Activated CD4-positive, alpha-beta T cell treated with anti-CD3 and anti-CD28 coated beads, Interleukin-2, amount 10 ng/mL, durations not matched to agents 24 days and 14 days (primary cell): ENCODE measurements at regions of chr11 and their contacts with region 1.

Region 1: DNA sequence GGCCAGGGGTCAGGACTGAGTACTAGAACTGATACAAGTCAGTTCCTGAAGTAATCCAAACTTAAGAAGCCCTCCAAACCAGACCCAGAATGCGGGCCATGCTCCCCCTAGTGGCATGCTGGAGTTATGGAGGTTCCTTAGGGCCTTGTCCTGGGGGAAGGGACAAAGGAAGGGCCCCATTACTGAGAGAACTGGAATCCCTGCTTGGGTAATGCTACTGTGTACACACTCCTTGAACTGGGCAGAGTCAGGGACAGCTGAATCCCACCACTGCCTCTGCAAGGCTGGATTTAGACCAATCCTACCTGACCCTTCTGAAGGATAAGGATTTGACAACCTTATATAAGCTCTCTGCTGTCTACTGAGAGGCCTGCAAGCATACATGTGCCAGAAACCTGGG is 97.3 kb upstream of the AKIP1 start:
- DNase-seq: peak; percentile 78
- H3K4me3 Mint-ChIP-seq: no peak overlapping the region
- H3K27ac Mint-ChIP-seq: no peak overlapping the region
- H3K4me1 Mint-ChIP-seq: peaks cover 9% of the 10 kb centered on the region
- H3K27me3 Mint-ChIP-seq: peaks cover 20% of the 10 kb centered on the region

Region 2: GRCh38 chr11:8688414-8689362 is 125.0 kb before region 1 on chr11:
- intact Hi-C with region 1: loop called (anchors 10 kb)
- DNase-seq: peak; percentile 96
- H3K4me3 Mint-ChIP-seq: peak overlapping the region; percentile 94
- H3K27ac Mint-ChIP-seq: peak overlapping the region; percentile 88
- H3K4me1 Mint-ChIP-seq: peaks cover 43% of the 10 kb centered on the region
- H3K27me3 Mint-ChIP-seq: no peaks in the 10 kb centered on the region

Region 3: GRCh38 chr11:8709002-8709672 is 104.5 kb before region 1 on chr11:
- intact Hi-C with region 1: no loop called
- DNase-seq: no peak
- H3K4me3 Mint-ChIP-seq: no peak overlapping the region
- H3K27ac Mint-ChIP-seq: no peak overlapping the region
- H3K4me1 Mint-ChIP-seq: peaks cover 2% of the 10 kb centered on the region
- H3K27me3 Mint-ChIP-seq: no peaks in the 10 kb centered on the region

Region 4: GRCh38 chr11:8794677-8795103 is 19.0 kb before region 1 on chr11:
- intact Hi-C with region 1: no loop called
- DNase-seq: no peak
- H3K4me3 Mint-ChIP-seq: no peak overlapping the region
- H3K27ac Mint-ChIP-seq: no peak overlapping the region
- H3K4me1 Mint-ChIP-seq: no peaks in the 10 kb centered on the region
- H3K27me3 Mint-ChIP-seq: peaks cover 31% of the 10 kb centered on the region

Region 5: DNA sequence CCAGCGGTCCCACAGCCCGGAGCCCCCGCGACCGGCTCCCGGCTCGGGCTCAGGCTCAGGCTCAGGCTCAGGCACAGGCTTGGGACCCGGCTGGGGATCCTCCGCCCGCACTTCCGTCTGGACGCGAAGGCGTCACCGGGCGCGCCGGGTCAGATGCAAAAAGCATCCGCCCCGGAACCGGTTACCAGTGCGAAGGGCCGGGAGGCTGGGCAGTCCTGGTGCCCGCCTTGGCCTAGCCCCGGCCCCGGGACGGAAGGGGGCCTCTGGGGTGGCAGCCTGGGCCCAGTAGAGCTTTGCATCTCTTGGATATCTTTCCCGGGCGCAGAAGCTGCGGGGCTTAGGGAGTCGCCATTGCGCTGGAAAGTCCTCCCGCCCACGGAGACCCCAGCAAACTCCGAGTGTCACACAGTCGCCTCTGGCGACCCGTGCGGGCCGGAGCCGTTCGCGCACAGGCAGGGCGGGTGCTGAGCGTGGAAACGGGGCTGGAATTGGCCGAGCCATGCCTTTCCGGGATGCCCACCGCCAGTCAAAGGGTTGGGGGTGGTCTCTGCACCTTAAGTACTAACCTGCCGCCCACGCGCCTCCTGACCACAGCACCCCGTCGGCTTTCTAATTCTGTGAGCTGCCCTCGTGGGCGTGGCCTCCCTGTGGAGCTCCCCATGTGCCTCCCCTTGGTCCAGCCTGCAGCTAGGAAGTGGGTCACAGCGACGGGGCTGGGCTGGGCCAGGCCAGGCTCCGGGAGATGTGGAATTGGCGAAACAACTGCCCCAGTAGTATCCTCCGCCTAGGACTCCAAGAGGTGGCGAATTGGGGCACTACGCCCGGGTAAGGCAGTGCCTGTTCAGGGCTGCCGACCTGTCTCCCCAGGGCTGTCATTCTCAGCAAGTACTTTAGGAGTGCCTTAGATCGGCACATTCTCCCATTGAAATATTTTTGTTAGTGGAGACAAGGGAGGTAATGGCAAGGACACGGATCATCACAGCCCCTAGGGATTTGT is 151.0 kb after region 1 on chr11 and contains the start of gene TMEM9B:
- intact Hi-C with region 1: no loop called
- DNase-seq: peak; percentile 95
- H3K4me3 Mint-ChIP-seq: peak within 1 kb of the TSS; percentile 100
- H3K27ac Mint-ChIP-seq: peak within 1 kb of the TSS; percentile 95
- H3K4me1 Mint-ChIP-seq: peaks cover 30% of the 10 kb centered on the region
- H3K27me3 Mint-ChIP-seq: no peaks in the 10 kb centered on the region
- total RNA-seq, gene TMEM9B: 25.2 and 26.5 TPM in 2 replicates